ENCODE measurements at regions of chrX and their contacts with region 1.

Region 1: GRCh38 chrX:120477453-120477852 is 8.4 kb upstream of the LAMP2 start:
- DNase-seq: no peak
- ATAC-seq: no peak
- H3K4me3 ChIP-seq: no peak overlapping the region
- H3K4me3 Mint-ChIP-seq: no peak overlapping the region
- H3K27ac ChIP-seq: no peak overlapping the region
- H3K27ac Mint-ChIP-seq: no peak overlapping the region
- H3K4me1 ChIP-seq: no peaks in the 10 kb centered on the region
- H3K4me1 Mint-ChIP-seq: no peaks in the 10 kb centered on the region
- H3K27me3 ChIP-seq: no peaks in the 10 kb centered on the region
- H3K27me3 Mint-ChIP-seq: no peaks in the 10 kb centered on the region
- CTCF ChIP-seq: no peak

Region 2: GRCh38 chrX:120365320-120365719 is 112.1 kb before region 1 on chrX:
- CTCF ChIA-PET with region 1: interaction called, 4 read pairs
- POLR2A ChIA-PET with region 1: no interaction called
- intact Hi-C with region 1: loop called in 1 of 2 experiments (anchors 5 kb)
- DNase-seq: peak; percentile 6 to 60 (median 43)
- ATAC-seq: no peak
- H3K4me3 ChIP-seq: no peak overlapping the region
- H3K4me3 Mint-ChIP-seq: no peak overlapping the region
- H3K27ac ChIP-seq: no peak overlapping the region
- H3K27ac Mint-ChIP-seq: no peak overlapping the region
- H3K4me1 ChIP-seq: no peaks in the 10 kb centered on the region
- H3K4me1 Mint-ChIP-seq: no peaks in the 10 kb centered on the region
- H3K27me3 ChIP-seq: no peaks in the 10 kb centered on the region
- H3K27me3 Mint-ChIP-seq: peaks cover 2% of the 10 kb centered on the region
- CTCF ChIP-seq: peak; percentile 32

Region 3: GRCh38 chrX:120380699-120381098 is 96.8 kb before region 1 on chrX:
- CTCF ChIA-PET with region 1: interaction called, 11 read pairs
- POLR2A ChIA-PET with region 1: no interaction called
- intact Hi-C with region 1: loop called (anchors 1 to 2 kb)
- DNase-seq: peak in 4 of 9 experiments; percentile 11 to 69 (median 38)
- ATAC-seq: peak; percentile 59
- H3K4me3 ChIP-seq: no peak overlapping the region
- H3K4me3 Mint-ChIP-seq: no peak overlapping the region
- H3K27ac ChIP-seq: no peak overlapping the region
- H3K27ac Mint-ChIP-seq: no peak overlapping the region
- H3K4me1 ChIP-seq: no peaks in the 10 kb centered on the region
- H3K4me1 Mint-ChIP-seq: peaks cover 6% of the 10 kb centered on the region
- H3K27me3 ChIP-seq: no peaks in the 10 kb centered on the region
- H3K27me3 Mint-ChIP-seq: no peaks in the 10 kb centered on the region
- CTCF ChIP-seq: peak; percentile 49

Region 4: GRCh38 chrX:120534413-120535205 is 57.2 kb after region 1 on chrX:
- CTCF ChIA-PET with region 1: no interaction called
- POLR2A ChIA-PET with region 1: no interaction called
- intact Hi-C with region 1: no loop called
- DNase-seq: no peak
- ATAC-seq: no peak
- H3K4me3 ChIP-seq: no peak overlapping the region
- H3K4me3 Mint-ChIP-seq: no peak overlapping the region
- H3K27ac ChIP-seq: no peak overlapping the region
- H3K27ac Mint-ChIP-seq: no peak overlapping the region
- H3K4me1 ChIP-seq: no peaks in the 10 kb centered on the region
- H3K4me1 Mint-ChIP-seq: no peaks in the 10 kb centered on the region
- H3K27me3 ChIP-seq: no peaks in the 10 kb centered on the region
- H3K27me3 Mint-ChIP-seq: no peaks in the 10 kb centered on the region
- CTCF ChIP-seq: no peak